Activated CD4-positive, alpha-beta memory T cell treated with anti-CD3 and anti-CD28 coated beads for 36 hours (primary cell): ENCODE measurements at regions of chr17 and their contacts with region 1.

Region 1: GRCh38 chr17:50087246-50087911 is 7.8 kb upstream of the PDK2 start:
- DNase-seq: peak; percentile 85
- H3K4me3 Mint-ChIP-seq: no peak overlapping the region
- H3K27ac Mint-ChIP-seq: no peak overlapping the region
- H3K4me1 Mint-ChIP-seq: no peaks in the 10 kb centered on the region
- H3K27me3 Mint-ChIP-seq: no peaks in the 10 kb centered on the region

Region 2: DNA sequence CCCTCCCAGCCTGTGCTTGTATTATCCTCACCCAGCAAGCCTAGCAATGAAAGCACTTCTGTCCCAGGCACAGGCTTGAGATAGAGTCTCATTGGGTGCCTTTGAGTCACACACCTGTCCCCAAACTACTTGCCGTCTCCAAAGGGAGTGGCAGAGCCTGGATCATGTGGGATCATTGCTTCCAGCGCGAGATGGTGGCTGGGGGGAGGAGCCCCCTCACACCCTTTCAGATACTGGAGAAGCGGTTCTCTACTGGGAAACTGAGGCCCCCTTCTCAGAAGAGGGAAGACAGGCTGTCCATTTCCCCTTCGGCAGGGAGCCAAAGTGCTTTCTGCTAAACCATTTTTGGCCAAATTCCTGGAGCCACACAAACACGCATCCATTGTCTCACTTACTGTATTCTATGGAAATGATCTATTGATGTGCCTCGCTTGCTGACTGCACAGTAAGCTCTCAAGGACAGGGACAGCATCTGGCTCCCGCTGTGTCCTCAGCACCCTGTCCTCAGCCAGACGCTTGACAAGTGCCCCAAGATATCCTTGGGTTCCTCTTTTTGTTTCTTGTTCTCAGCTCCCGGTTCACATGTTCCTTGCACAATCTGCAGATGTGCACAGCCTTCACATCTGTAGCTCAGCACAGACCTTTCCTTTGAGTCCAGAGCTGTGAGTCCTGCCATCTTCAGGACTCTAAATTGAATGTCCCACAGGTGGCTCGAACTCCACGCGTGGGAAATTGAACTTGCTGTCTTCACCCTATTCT is 66.4 kb before region 1 on chr17:
- CTCF ChIA-PET with region 1: interaction called, 167 read pairs
- POLR2A ChIA-PET with region 1: no interaction called
- intact Hi-C with region 1: no loop called
- DNase-seq: no peak
- H3K4me3 Mint-ChIP-seq: no peak overlapping the region
- H3K27ac Mint-ChIP-seq: no peak overlapping the region
- H3K4me1 Mint-ChIP-seq: no peaks in the 10 kb centered on the region
- H3K27me3 Mint-ChIP-seq: peaks cover 9% of the 10 kb centered on the region

Region 3: DNA sequence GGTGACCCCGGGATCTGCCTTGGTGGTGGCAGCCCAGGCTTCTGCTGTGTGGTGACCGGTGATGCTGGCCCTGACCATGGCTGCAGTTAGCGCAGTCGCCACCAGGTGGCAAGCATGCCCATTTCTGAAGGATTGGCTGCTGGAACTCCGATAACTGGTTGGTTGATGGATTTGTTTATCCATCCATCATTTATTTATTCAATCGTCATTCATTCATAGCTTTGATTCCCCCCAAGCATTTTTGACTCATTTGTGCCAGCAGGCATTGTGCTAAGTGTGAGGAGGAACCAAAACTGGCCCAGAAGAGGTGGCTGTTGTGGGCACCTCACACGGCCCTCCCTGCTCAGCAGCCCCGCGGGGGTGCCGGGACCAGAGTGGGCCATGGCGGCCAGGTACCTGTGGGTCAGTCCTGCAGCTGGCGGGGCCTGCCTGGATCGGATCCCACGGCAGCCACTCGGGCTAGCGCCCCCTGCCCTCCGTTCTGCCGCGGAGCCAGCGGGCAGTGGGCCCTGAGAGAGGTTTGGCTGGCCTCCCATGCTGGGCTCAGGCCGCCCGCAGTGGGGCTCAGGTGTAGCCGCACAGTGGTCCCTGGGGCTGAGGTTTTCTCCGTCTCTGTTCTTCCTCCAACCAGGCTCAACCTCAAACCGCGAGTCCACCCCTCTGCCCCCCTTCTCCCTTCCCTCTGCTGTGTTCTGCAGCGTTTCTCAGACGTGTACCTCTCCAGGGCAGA is 60.3 kb before region 1 on chr17:
- CTCF ChIA-PET with region 1: interaction called, 167 read pairs
- POLR2A ChIA-PET with region 1: no interaction called
- intact Hi-C with region 1: loop called (anchors 1 kb)
- DNase-seq: peak; percentile 87
- H3K4me3 Mint-ChIP-seq: peak overlapping the region; percentile 44
- H3K27ac Mint-ChIP-seq: no peak overlapping the region
- H3K4me1 Mint-ChIP-seq: peaks cover 6% of the 10 kb centered on the region
- H3K27me3 Mint-ChIP-seq: peaks cover 26% of the 10 kb centered on the region

Region 4: DNA sequence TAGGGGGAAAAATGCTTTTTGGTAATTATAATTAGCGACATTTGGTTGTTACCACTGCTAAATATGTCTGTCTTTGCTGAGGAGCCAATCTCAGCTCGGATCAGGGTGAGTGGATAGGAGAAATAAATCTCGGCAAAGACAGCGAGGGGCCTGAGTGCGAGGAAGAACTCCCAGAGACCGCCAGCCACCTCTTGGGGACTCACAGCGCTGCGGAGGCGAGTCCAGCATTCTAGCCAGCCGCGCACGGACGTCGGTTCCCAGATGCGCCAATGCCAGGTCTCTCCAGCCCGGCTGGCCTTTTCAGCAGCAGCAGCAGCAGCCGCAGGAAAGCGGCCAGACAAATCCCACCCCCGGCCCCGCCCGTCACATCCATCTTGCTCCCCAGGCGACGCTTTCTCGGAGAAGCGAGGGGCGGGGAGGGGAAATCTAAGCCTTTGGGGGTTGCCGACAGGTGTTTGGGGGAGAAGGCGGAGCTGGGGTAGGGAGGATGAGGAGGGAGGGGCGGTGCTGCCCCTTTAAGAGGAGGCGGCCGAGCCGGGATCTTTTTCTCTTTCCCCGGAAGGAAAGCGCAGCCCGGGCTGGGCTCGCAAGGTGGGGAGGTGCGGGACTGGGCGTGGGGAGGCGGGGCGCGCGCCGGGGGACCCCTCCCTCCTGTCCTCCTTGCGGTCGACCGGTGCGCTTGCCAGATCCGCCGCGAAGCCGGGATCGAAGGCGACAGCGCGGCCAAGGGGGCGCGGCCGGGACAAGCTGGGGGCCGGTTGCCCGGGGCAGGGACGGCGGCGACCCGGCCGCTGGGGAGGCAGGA is 31.8 kb before region 1 on chr17 and contains the start of gene ITGA3:
- CTCF ChIA-PET with region 1: interaction called, 51 read pairs
- POLR2A ChIA-PET with region 1: no interaction called
- intact Hi-C with region 1: loop called (anchors 2 kb)
- DNase-seq: peak; percentile 78
- H3K4me3 Mint-ChIP-seq: peak within 1 kb of the TSS; percentile 87
- H3K27ac Mint-ChIP-seq: peak within 1 kb of the TSS; percentile 84
- H3K4me1 Mint-ChIP-seq: peaks cover 31% of the 10 kb centered on the region
- H3K27me3 Mint-ChIP-seq: no peaks in the 10 kb centered on the region
- total RNA-seq, gene ITGA3: 15.8 to 17.6 TPM

Region 5: DNA sequence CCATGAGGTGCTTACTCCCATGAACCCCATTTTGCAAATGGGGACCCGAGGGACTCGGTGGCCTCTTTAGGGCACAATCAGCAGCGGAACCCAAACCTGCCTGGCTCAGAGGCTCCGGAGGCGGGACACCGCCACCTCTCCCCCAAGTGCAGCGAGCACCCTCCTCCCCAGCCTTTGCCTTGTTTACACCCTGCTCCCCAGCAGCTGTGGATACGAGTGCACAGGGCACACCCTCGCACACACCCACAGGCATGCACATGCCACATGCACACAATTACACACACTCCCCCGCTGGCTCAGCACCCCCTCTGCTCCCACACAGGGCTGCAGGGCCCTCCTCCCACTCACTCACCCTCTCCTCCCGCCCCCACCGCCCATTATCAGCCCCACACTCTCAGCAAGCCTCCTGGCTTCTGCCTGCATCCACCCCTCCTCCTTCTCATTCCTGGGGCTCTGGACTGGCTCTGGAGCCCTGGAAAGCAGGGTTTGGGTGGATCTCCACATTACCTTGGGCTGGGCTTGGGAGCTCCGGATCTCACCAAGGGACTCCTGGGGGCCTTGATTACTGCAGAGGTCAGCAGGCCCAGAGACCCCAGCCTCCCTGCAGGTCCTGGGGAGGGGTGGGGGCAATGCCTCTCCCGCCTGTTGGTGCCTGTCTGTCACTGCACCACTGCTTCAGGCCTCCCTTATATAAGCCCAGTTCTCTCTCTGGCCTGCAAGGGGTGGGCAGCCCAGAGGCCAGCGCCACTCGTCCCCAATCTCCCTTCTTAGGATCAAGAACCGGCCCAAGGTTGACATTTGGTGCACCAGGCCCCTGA is 14.2 kb after region 1 on chr17:
- CTCF ChIA-PET with region 1: interaction called, 24 read pairs
- POLR2A ChIA-PET with region 1: no interaction called
- intact Hi-C with region 1: no loop called
- DNase-seq: no peak
- H3K4me3 Mint-ChIP-seq: no peak overlapping the region
- H3K27ac Mint-ChIP-seq: no peak overlapping the region
- H3K4me1 Mint-ChIP-seq: peaks cover 8% of the 10 kb centered on the region
- H3K27me3 Mint-ChIP-seq: no peaks in the 10 kb centered on the region

Region 6: GRCh38 chr17:50114849-50115357 is 27.5 kb after region 1 on chr17:
- CTCF ChIA-PET with region 1: interaction called, 11 read pairs
- POLR2A ChIA-PET with region 1: interaction called, 3 read pairs
- intact Hi-C with region 1: no loop called
- DNase-seq: peak; percentile 53
- H3K4me3 Mint-ChIP-seq: no peak overlapping the region
- H3K27ac Mint-ChIP-seq: no peak overlapping the region
- H3K4me1 Mint-ChIP-seq: peaks cover 10% of the 10 kb centered on the region
- H3K27me3 Mint-ChIP-seq: peaks cover 24% of the 10 kb centered on the region

Region 7: GRCh38 chr17:50240851-50241250 is 153.5 kb after region 1 on chr17:
- CTCF ChIA-PET with region 1: no interaction called
- POLR2A ChIA-PET with region 1: no interaction called
- intact Hi-C with region 1: no loop called
- DNase-seq: no peak
- H3K4me3 Mint-ChIP-seq: no peak overlapping the region
- H3K27ac Mint-ChIP-seq: no peak overlapping the region
- H3K4me1 Mint-ChIP-seq: no peaks in the 10 kb centered on the region
- H3K27me3 Mint-ChIP-seq: peaks cover 23% of the 10 kb centered on the region

Region 8: GRCh38 chr17:50258647-50259476 is 171.5 kb after region 1 on chr17:
- CTCF ChIA-PET with region 1: no interaction called
- POLR2A ChIA-PET with region 1: no interaction called
- intact Hi-C with region 1: no loop called
- DNase-seq: no peak
- H3K4me3 Mint-ChIP-seq: no peak overlapping the region
- H3K27ac Mint-ChIP-seq: no peak overlapping the region
- H3K4me1 Mint-ChIP-seq: no peaks in the 10 kb centered on the region
- H3K27me3 Mint-ChIP-seq: peaks cover 10% of the 10 kb centered on the region